Dendritic cell treated with granulocyte-macrophage colony-stimulating factor and Interleukin-4, amounts not matched to agents 40 ng/mL and 50 ng/mL, for 4 days (primary cell): ENCODE measurements at regions of chr16 and their contacts with region 1.

Region 1: DNA sequence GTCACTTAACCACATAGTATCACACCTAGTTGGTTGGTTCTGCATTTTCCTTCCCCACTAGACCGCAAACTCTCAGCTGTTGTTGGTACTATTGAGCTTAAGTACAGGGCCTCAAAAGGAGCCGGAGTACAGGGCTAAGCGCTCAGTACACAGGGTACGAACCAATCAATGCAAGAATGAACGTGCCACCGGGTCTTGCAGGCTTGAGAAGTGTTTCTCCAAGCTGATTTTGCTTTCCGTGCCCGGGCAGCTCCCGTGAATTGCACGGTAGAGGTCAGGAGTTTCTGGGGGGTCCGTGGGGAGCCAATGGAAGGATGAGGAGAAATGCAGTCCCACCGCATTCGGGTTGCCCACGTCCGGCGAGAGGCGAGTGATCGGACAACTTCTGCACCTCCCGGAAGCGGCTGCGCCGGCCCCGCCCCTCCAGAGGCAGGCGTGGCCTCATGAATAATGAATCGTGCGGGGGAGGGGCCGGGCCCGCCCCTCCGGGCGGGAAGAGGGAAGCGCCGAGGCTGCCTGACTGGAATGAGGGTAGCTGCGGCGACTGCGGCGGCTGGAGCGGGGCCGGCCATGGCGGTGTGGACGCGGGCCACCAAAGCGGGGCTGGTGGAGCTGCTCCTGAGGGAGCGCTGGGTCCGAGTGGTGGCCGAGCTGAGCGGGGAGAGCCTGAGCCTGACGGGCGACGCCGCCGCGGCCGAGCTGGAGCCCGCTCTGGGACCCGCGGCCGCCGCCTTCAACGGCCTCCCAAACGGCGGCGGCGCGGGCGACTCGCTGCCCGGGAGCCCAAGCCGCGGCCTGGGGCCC is at the start of gene SNTB2:
- H3K4me3 Mint-ChIP-seq: peak within 1 kb of the TSS; percentile 90
- H3K27ac Mint-ChIP-seq: peak within 1 kb of the TSS; percentile 91
- H3K4me1 Mint-ChIP-seq: peaks cover 35% of the 10 kb centered on the region
- H3K27me3 Mint-ChIP-seq: peaks cover 46% of the 10 kb centered on the region

Region 2: DNA sequence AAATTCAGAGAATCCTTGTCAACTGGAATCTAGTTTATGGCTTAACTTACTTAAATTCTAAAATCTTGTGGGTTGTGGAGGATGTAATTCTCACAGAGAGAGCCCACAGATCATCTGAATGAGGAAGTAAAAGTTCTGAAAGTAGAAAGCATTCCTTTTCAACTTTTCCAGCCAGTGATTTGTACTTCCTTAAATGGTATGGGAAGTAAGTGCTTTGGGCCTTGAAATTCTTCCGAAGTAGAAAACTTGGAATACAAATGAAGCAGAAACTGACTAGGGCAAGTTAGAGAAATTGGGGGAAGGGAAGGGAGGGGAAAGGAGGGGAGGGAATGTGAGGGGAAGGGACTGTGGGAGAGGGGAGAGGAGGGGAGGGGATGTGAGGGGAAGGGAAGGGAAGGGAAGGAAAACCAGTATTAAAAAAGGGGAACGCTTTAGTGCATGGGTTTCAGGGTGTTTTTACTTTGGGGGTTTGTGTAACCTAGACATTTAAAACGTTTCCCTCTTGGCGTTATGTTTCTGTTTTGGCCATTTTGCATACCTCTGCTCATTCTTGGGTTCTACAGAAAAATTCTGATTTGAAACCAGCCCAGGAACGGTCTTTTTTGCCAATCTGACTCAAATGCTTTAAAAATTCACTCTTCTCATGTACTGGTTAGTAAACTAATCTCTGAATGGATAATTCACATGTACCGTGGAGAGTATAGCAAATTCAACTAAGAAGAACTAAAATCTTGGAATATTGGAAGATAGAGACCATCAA is 15.3 kb before region 1 on chr16:
- intact Hi-C with region 1: loop called (anchors 2 kb)
- H3K4me3 Mint-ChIP-seq: no peak overlapping the region
- H3K27ac Mint-ChIP-seq: peak overlapping the region; percentile 80
- H3K4me1 Mint-ChIP-seq: peaks cover 43% of the 10 kb centered on the region
- H3K27me3 Mint-ChIP-seq: peaks cover 3% of the 10 kb centered on the region

Region 3: GRCh38 chr16:69260019-69260418 is 73.2 kb after region 1 on chr16:
- intact Hi-C with region 1: no loop called
- H3K4me3 Mint-ChIP-seq: no peak overlapping the region
- H3K27ac Mint-ChIP-seq: no peak overlapping the region
- H3K4me1 Mint-ChIP-seq: no peaks in the 10 kb centered on the region
- H3K27me3 Mint-ChIP-seq: peaks cover 1% of the 10 kb centered on the region